MCF 10A (cell line): ENCODE measurements at regions of chr7 and their contacts with region 1.

Region 1: DNA sequence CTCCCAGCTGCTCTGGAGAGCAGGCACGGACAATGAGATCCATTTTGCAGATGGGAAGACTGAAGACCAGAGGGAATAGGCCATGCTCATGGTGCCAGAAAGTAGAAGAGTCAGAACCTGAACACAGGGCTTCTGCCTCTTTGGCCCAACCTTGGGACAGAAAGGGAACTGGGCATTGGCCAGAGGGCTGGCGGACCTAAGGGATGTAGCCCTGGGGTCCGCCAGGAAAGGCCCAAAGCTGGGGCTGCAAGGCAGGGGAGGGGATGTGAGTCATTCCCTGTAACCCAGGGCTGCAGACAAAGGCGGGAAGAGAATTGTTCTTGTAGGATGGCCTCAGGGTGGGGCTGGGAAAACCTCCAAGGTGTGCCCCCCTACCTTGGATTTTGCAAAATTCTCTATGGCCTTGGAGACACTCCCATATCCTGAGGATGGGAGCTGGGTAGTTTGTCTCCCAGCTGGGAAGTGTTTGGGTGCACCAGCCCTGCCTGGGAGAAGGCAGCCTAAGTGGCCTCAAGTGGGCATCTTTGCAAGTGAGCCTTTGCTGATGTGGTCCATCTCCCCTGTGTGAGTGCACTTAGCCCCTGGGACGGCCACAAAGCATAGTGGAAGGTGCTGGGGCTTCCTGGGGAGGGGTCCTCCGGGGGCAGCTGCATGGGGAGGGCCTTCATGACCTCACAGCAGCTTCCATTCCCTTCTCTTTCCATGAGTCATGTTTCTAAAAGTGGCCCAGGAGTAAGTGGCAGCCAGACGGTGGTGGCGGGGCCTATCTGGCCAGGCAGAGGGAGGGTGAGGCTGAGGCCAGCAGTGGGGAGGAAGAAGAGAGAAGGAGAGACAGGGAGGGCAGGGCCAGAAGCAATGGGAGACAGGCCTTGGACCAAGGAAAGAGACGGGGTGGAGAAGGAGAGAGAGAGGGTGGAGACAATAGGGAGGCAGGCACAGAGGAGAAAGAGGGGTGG is 9.2 kb downstream of the AQP1 start:
- DNase-seq: peak; percentile 50
- H3K4me3 Mint-ChIP-seq: no peak overlapping the region
- H3K27ac Mint-ChIP-seq: no peak overlapping the region
- H3K4me1 Mint-ChIP-seq: peaks cover 18% of the 10 kb centered on the region
- H3K27me3 Mint-ChIP-seq: no peaks in the 10 kb centered on the region
- CTCF ChIP-seq: no peak

Region 2: GRCh38 chr7:30931161-30931928 is 10.5 kb after region 1 on chr7:
- CTCF ChIA-PET with region 1: interaction called, 18 read pairs
- POLR2A ChIA-PET with region 1: no interaction called
- intact Hi-C with region 1: no loop called
- DNase-seq: no peak
- H3K4me3 Mint-ChIP-seq: no peak overlapping the region
- H3K27ac Mint-ChIP-seq: no peak overlapping the region
- H3K4me1 Mint-ChIP-seq: no peaks in the 10 kb centered on the region
- H3K27me3 Mint-ChIP-seq: peaks cover 12% of the 10 kb centered on the region
- CTCF ChIP-seq: no peak